ENCODE measurements at regions of chr6 and their contacts with region 1.

Region 1: GRCh38 chr6:82270881-82271645 is 23.5 kb upstream of the IBTK start:
- DNase-seq: peak; percentile 57
- ATAC-seq: no peak
- H3K4me3 ChIP-seq: no peak overlapping the region
- H3K27ac ChIP-seq: no peak overlapping the region
- H3K4me1 ChIP-seq: peaks cover 16% of the 10 kb centered on the region
- H3K27me3 ChIP-seq: no peaks in the 10 kb centered on the region
- CTCF ChIP-seq: peak; percentile 71

Region 2: GRCh38 chr6:82331031-82331773 is 60.1 kb after region 1 on chr6:
- CTCF ChIA-PET with region 1: no interaction called
- POLR2A ChIA-PET with region 1: no interaction called
- intact Hi-C with region 1: loop called (anchors 2 kb)
- DNase-seq: peak; percentile 79
- ATAC-seq: peak; percentile 90
- H3K4me3 ChIP-seq: no peak overlapping the region
- H3K27ac ChIP-seq: no peak overlapping the region
- H3K4me1 ChIP-seq: peaks cover 14% of the 10 kb centered on the region
- H3K27me3 ChIP-seq: no peaks in the 10 kb centered on the region
- CTCF ChIP-seq: peak; percentile 55

Region 3: DNA sequence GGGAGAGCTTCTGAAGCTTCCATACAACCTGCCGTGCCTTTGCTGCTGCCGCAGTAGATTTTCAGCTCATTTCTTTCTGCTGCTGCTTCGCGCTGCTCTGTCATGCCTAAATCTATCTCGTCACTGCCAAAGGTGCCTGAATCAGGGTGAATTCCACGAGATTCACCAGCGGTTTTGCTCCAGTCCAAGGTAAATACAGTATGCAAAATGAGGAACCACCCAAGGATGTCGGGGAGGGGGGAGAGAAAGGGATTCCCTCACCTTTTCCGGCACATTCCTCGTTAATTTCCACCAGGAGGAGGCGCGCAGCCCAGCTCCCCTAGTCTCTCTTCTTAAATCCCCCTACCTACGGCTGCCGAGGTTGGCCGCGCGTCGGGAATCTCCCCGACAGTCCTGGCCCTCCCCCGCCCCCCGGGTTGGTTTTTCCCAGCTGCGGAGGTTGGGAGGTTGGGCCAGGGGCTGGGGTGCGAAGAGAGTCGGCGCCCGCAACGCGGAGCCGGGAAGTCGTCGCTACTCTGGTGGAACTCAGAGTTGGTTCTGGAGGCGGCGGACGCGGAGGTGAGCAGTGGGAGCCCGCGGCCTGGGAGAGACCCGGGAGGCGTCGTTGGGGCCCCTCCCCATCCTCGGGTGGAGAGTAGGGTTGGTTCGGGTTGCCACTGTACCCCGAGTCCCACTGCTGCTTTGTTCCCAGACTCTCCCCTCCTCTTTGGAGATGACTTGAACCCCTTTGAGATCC is 92.5 kb after region 1 on chr6 and contains the start of gene TPBG:
- CTCF ChIA-PET with region 1: no interaction called
- POLR2A ChIA-PET with region 1: no interaction called
- intact Hi-C with region 1: loop called (anchors 5 kb)
- DNase-seq: peak; percentile 69
- ATAC-seq: peak; percentile 59
- H3K4me3 ChIP-seq: peak within 1 kb of the TSS; percentile 79
- H3K27ac ChIP-seq: peak within 1 kb of the TSS; percentile 81
- H3K4me1 ChIP-seq: peaks cover 28% of the 10 kb centered on the region
- H3K27me3 ChIP-seq: no peaks in the 10 kb centered on the region
- CTCF ChIP-seq: peak; percentile 48
- total RNA-seq, gene TPBG: 43.0 and 49.6 TPM in 2 replicates

Region 4: GRCh38 chr6:82541306-82541705 is 270.2 kb after region 1 on chr6:
- CTCF ChIA-PET with region 1: interaction called, 4 read pairs
- POLR2A ChIA-PET with region 1: no interaction called
- intact Hi-C with region 1: loop called (anchors 2 kb)
- DNase-seq: no peak
- ATAC-seq: no peak
- H3K4me3 ChIP-seq: no peak overlapping the region
- H3K27ac ChIP-seq: no peak overlapping the region
- H3K4me1 ChIP-seq: 0 out of 2 replicates have a peak, but pooled peaks cover 5% of the 10 kb centered on the region
- H3K27me3 ChIP-seq: no peaks in the 10 kb centered on the region
- CTCF ChIP-seq: no peak

Region 5: GRCh38 chr6:82589509-82590206 is 318.6 kb after region 1 on chr6:
- CTCF ChIA-PET with region 1: no interaction called
- POLR2A ChIA-PET with region 1: no interaction called
- intact Hi-C with region 1: loop called (anchors 2 kb)
- DNase-seq: peak; percentile 94
- ATAC-seq: peak; percentile 91
- H3K4me3 ChIP-seq: no peak overlapping the region
- H3K27ac ChIP-seq: peak overlapping the region; percentile 96
- H3K4me1 ChIP-seq: peaks cover 26% of the 10 kb centered on the region
- H3K27me3 ChIP-seq: no peaks in the 10 kb centered on the region
- CTCF ChIP-seq: peak; percentile 70

Measured in PC-3 (cell line).